PC-9 (cell line): ENCODE measurements at regions of chr12 and their contacts with region 1.

Region 1: GRCh38 chr12:56468216-56469006 is at the start of gene SPRYD4:
- DNase-seq: peak; percentile 79 to 88
- H3K4me3 ChIP-seq: peak within 1 kb of the TSS; percentile 99
- H3K27ac ChIP-seq: peak within 1 kb of the TSS; percentile 74
- H3K4me1 ChIP-seq: peaks cover 7% of the 10 kb centered on the region; the same call in 1 of the 2 replicates
- H3K27me3 ChIP-seq: no peaks in the 10 kb centered on the region
- CTCF ChIP-seq: peak; percentile 41; the same call in 1 of the 2 replicates
- total RNA-seq, gene SPRYD4: 3.2 and 3.3 TPM in 2 replicates

Region 2: GRCh38 chr12:56053407-56053893 is 415.0 kb before region 1 on chr12:
- CTCF ChIA-PET with region 1: no interaction called
- POLR2A ChIA-PET with region 1: interaction called, 14 read pairs
- intact Hi-C with region 1: no loop called
- DNase-seq: no peak
- H3K4me3 ChIP-seq: no peak overlapping the region
- H3K27ac ChIP-seq: no peak overlapping the region
- H3K4me1 ChIP-seq: peaks cover 10% of the 10 kb centered on the region
- H3K27me3 ChIP-seq: no peaks in the 10 kb centered on the region
- CTCF ChIP-seq: no peak

Region 3: DNA sequence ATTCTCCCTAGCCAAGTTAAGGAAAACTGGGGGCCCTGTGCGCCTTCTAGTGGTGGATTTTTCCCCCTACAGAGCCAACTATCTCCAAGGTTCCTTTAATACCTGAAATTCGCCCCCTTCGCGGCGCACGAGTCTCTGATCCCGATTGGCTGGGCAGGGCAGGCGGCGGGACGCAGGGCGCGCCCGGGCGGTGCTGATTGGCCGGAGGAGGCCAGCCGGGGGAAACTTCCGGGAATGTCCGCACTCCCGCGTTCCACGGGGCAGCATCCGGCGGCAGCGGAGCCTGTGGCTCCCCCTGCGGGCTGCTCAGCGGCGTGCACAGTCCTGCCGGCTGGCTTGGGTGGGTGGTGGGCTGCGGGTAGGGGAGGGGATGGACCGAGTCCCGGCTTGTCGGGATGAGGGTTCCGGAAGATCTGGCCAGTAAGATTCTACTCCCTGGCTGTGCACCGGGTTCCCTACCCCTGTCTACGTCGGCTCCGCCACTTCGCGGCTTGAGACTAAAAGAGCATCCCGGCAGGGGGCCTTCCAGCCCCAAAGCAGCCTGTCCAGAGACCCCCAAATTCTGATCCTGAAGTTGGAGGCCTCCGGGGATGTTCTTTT is 244.2 kb before region 1 on chr12 and contains the start of gene NABP2:
- CTCF ChIA-PET with region 1: interaction called, 5 read pairs
- POLR2A ChIA-PET with region 1: interaction called, 23 read pairs
- intact Hi-C with region 1: no loop called
- DNase-seq: peak; percentile 92 to 98
- H3K4me3 ChIP-seq: peak within 1 kb of the TSS; percentile 91
- H3K27ac ChIP-seq: no peak within 1 kb of the TSS
- H3K4me1 ChIP-seq: peaks cover 27% of the 10 kb centered on the region
- H3K27me3 ChIP-seq: no peaks in the 10 kb centered on the region
- CTCF ChIP-seq: peak; percentile 81
- total RNA-seq, gene NABP2: 58.2 and 68.5 TPM in 2 replicates

Region 4: DNA sequence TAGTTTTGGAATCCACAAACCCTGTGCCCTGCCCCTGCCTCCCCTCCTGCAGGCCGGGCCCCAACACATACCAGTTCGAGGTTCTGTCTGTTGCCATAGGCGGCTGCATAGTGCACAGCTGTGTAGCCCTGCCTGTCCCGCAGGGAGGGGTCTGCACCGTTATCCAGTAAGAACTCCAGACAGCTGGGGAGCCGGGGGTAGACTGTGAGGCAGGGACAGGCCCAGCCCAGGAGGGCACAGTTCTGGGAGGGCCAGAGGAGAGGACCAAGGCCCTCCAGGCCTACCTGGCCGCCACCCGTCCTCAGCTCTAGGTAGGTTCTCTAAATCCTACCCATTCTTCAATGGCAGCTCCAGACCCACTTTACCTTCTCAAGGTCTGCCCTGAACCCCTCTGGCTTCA is 219.7 kb before region 1 on chr12:
- CTCF ChIA-PET with region 1: no interaction called
- POLR2A ChIA-PET with region 1: no interaction called
- intact Hi-C with region 1: no loop called
- DNase-seq: no peak
- H3K4me3 ChIP-seq: no peak overlapping the region
- H3K27ac ChIP-seq: no peak overlapping the region
- H3K4me1 ChIP-seq: no peaks in the 10 kb centered on the region
- H3K27me3 ChIP-seq: no peaks in the 10 kb centered on the region
- CTCF ChIP-seq: no peak

Region 5: GRCh38 chr12:56280849-56281248 is 187.6 kb before region 1 on chr12:
- CTCF ChIA-PET with region 1: interaction called, 14 read pairs
- POLR2A ChIA-PET with region 1: interaction called, 4 read pairs
- intact Hi-C with region 1: no loop called
- DNase-seq: no peak
- H3K4me3 ChIP-seq: no peak overlapping the region
- H3K27ac ChIP-seq: 0 out of 2 replicates have a peak overlapping the region, but pooled peaks have one; percentile 17
- H3K4me1 ChIP-seq: no peaks in the 10 kb centered on the region
- H3K27me3 ChIP-seq: no peaks in the 10 kb centered on the region
- CTCF ChIP-seq: no peak

Region 6: DNA sequence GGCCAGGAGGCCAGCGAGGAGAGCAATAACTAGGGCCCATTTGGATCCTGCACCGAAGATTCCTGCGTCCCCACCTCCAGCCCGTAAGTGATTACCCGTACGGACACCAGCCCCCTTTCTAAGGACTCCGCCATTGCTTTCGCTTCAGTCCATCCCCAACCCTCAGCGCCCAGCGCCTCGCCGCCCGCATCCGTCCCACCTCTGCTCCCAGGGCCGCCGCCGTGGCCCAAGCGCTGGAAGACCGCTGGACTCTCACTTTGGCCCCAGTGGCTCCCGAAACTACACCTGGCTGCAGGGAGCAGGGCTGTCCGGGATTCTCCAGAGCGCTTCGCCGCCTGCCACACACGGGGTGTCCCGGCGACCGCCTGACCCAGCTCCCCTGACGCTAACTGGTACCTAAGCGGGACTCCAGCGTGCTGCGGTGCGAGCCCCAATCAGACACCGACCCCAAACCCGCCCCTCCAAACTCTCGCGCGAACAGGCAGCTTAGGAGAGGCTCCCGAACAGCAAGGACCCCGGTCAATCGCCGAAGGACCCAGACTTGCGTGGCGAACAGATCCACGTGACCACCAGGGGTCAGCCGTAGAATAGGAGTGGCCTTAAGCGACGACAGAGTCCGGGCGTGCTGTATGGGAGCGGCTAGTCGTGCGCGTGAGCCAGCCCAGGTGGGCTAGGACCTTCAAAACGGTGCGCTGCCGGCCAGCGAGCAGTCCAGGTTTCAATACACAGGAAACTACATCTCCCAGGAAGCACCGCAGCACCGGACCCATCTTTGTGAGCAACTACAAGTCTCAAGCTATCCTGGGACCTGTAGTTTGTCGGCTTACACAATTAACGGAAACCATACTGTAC is 152.6 kb before region 1 on chr12 and contains the start of gene CNPY2:
- CTCF ChIA-PET with region 1: interaction called, 8 read pairs
- POLR2A ChIA-PET with region 1: no interaction called
- intact Hi-C with region 1: loop called (anchors 1 kb)
- DNase-seq: peak; percentile 95
- H3K4me3 ChIP-seq: peak within 1 kb of the TSS; percentile 83
- H3K27ac ChIP-seq: peak within 1 kb of the TSS; percentile 51
- H3K4me1 ChIP-seq: peaks cover 18% of the 10 kb centered on the region
- H3K27me3 ChIP-seq: no peaks in the 10 kb centered on the region
- CTCF ChIP-seq: no peak; the same call in 1 of the 2 replicates
- total RNA-seq, gene CNPY2: 78.2 and 82.1 TPM in 2 replicates

Region 7: GRCh38 chr12:57005980-57006808 is 537.8 kb after region 1 on chr12 and contains the start of gene ZBTB39:
- CTCF ChIA-PET with region 1: no interaction called
- POLR2A ChIA-PET with region 1: interaction called, 10 read pairs
- intact Hi-C with region 1: no loop called
- DNase-seq: peak in 1 of 2 experiments; percentile 70
- H3K4me3 ChIP-seq: peak within 1 kb of the TSS; percentile 62
- H3K27ac ChIP-seq: no peak within 1 kb of the TSS
- H3K4me1 ChIP-seq: peaks cover 11% of the 10 kb centered on the region
- H3K27me3 ChIP-seq: no peaks in the 10 kb centered on the region
- CTCF ChIP-seq: peak; percentile 68; the same call in 1 of the 2 replicates
- total RNA-seq, gene ZBTB39: 6.5 and 7.6 TPM in 2 replicates